ENCODE measurements at regions of chr9 and their contacts with region 1.

Region 1: DNA sequence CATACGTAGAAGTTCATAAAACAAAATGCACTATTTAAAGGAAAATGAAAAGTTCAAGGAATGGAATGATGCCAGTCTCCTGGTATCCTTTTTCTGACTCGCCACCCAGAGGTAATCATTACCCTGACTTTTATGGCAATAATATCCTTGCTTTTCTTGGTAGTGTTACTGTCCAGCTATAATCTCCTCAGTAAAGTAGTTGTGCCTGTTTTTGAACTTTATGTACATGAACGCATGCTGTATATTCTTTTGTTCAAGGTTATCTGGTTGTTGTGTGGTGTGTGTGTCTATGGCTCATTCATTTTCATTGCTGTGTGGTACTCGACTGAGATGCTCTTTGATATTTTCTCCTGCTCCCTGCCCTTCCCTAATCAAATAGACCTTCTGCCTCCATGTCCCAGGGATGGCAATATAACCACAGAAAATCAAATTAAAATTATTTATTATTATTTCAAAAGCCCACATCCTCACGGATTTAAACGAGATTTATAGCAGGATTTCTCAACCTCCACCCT is 29.2 kb upstream of the FBP1 start:
- DNase-seq: no peak
- H3K27ac ChIP-seq: no peak overlapping the region
- CTCF ChIP-seq: no peak

Region 2: DNA sequence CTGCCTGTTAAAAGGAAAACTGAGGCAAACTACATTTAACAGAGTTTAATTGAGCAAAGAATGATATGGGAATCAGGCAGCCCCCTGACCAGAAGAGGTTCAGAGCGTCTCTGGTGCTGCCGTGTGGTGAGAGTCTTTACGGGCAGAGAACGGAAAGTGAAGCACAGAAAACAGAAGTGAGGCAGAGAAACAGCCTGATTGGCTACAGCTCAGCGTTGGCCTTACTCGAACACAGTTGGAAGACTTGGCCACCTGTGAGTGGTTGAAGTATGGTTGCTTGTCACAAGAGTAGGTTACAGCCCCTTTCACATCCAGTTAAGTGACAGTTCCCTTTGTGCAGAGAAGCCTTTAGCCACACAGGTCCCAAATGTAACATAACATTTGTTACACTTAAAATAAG is 12.3 kb before region 1 on chr9:
- CTCF ChIA-PET with region 1: interaction called, 10 read pairs
- POLR2A ChIA-PET with region 1: no interaction called
- DNase-seq: no peak
- H3K27ac ChIP-seq: no peak overlapping the region
- CTCF ChIP-seq: no peak

Region 3: DNA sequence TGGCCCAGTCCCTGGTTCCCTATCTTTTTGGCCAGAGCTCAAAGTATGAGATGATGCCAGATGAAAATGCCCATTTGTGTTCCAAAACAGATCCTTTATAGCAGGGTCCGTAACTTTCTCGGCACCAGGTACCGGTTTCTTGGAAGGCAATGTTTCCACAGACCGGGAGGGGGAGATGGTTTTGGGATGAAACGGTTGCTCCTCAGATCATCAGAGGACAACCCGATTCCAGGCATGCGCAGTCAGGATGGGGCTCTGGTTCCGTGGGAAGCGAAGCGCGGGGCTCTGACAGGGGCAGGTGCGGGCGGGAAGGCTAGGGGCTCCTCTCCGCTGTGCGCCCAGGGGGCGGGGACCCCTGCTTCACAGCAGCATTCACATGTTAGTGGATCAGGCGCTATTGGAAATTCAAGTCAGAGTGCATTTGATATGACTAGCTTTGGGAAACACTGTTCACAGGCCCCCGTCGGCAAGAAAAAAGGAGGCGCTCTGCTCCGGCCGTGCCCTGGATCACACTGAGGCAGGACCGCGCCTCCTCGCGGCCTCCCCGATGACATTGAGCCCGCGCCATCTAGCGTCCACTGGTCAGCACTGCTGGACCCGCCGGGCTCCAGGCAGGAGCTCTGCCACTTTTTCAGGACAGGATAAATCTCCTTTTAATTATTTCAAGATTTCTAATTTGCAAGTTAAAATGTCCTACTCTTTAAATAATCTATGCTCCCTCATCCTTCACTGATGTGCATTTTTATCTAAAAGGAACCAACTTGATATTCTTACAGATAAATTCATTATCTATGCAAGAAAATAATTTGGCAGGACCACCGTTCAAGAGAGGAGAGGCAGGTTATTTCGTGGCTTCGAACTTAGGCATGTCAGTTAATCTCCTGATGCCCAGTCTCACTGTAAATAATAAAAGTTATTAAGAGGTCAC is 459.0 kb after region 1 on chr9:
- CTCF ChIA-PET with region 1: interaction called, 42 read pairs
- POLR2A ChIA-PET with region 1: no interaction called
- DNase-seq: peak; percentile 91
- H3K27ac ChIP-seq: peak overlapping the region; percentile 58
- CTCF ChIP-seq: peak; percentile 100